ENCODE measurements at regions of chr20 and their contacts with region 1.

Region 1: GRCh38 chr20:2330090-2330695 is 34.4 kb downstream of the TGM3 start:
- DNase-seq: no peak
- H3K4me3 ChIP-seq: no peak overlapping the region
- H3K27ac ChIP-seq: no peak overlapping the region
- H3K4me1 ChIP-seq: no peaks in the 10 kb centered on the region
- H3K27me3 ChIP-seq: peaks cover 46% of the 10 kb centered on the region
- CTCF ChIP-seq: no peak

Region 2: GRCh38 chr20:2206957-2207769 is 123.0 kb before region 1 on chr20:
- dilution Hi-C with region 1: loop called (anchors 10 kb)
- DNase-seq: no peak
- H3K4me3 ChIP-seq: peak overlapping the region; percentile 56 to 68 (median 66)
- H3K27ac ChIP-seq: no peak overlapping the region
- H3K4me1 ChIP-seq: peaks cover 6% of the 10 kb centered on the region
- H3K27me3 ChIP-seq: peaks cover 5% of the 10 kb centered on the region
- CTCF ChIP-seq: peak in 2 of 3 experiments; percentile 87 to 95

Measured in keratinocyte (primary cell).